ENCODE measurements at regions of chr6 and their contacts with region 1.

Region 1: GRCh38 chr6:53701333-53702218 is 36.0 kb upstream of the KLHL31 start:
- DNase-seq: no peak
- H3K4me3 ChIP-seq: no peak overlapping the region
- H3K27ac ChIP-seq: no peak overlapping the region
- H3K4me1 ChIP-seq: no peaks in the 10 kb centered on the region
- H3K27me3 ChIP-seq: no peaks in the 10 kb centered on the region; a peak in 2 of 7 replicates
- CTCF ChIP-seq: no peak
- EP300 ChIP-seq: no peak
- POLR2A ChIP-seq: no peak
- RAD21 ChIP-seq: no peak

Region 2: DNA sequence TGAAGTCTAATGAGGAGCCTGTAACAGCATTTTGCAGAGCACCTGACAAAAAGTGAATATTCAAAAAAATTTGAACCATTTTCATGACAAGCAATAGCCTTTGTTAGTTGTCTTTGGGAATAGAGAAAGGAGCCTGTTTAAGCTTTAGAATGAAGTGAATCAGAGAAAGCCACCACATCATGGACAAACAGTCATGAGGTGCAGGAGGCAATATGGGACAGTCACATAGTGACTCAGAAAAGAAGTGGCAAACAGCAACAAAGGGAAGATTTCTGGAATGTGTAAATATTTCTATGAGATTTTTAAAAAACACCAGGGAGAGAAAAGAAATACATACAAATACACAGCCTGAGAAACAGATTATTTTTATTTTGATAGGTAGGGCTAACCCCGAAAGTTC is 42.6 kb before region 1 on chr6:
- CTCF ChIA-PET with region 1: no interaction called
- POLR2A ChIA-PET with region 1: no interaction called
- DNase-seq: no peak
- H3K4me3 ChIP-seq: no peak overlapping the region
- H3K27ac ChIP-seq: no peak overlapping the region
- H3K4me1 ChIP-seq: no peaks in the 10 kb centered on the region
- H3K27me3 ChIP-seq: no peaks in the 10 kb centered on the region
- CTCF ChIP-seq: no peak
- EP300 ChIP-seq: no peak
- POLR2A ChIP-seq: no peak
- RAD21 ChIP-seq: no peak

Region 3: GRCh38 chr6:53718597-53719460 is 17.3 kb after region 1 on chr6:
- CTCF ChIA-PET with region 1: interaction called, 132 read pairs
- POLR2A ChIA-PET with region 1: interaction called, 3 read pairs
- DNase-seq: no peak
- H3K4me3 ChIP-seq: no peak overlapping the region
- H3K27ac ChIP-seq: no peak overlapping the region
- H3K4me1 ChIP-seq: no peaks in the 10 kb centered on the region
- H3K27me3 ChIP-seq: no peaks in the 10 kb centered on the region
- CTCF ChIP-seq: peak in 2 of 3 experiments; percentile 72 to 85; a peak in 3 of 4 replicates
- EP300 ChIP-seq: no peak
- POLR2A ChIP-seq: no peak
- RAD21 ChIP-seq: peak; percentile 66 to 69